Psoas muscle (tissue), 8 donors: ENCODE measurements at regions of chr2 and their contacts with region 1.

Region 1: DNA sequence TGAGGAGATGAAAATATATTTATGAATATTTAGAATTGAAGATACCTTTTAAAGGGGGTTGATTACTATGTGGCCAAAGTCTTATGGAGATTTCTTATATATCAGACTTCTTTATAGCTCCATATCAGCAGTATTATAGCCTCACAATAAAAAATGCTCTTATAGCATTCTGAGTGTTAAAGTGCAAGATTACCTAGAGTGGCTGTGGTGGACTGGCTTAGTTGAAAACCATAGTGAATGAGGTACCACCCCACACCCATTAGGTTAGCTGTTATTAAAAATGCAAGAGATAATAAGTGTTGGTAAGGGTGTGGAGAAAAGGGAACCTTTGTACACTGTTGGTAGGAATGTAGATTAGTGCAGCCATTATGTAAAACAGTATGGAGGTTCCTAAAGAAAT is 39.7 kb downstream of the NCOA1 start:
- DNase-seq: no peak
- ATAC-seq: no peak
- H3K4me3 ChIP-seq: no peak overlapping the region
- H3K27ac ChIP-seq: no peak overlapping the region
- H3K4me1 ChIP-seq: no peaks in the 10 kb centered on the region
- H3K27me3 ChIP-seq: no peaks in the 10 kb centered on the region
- CTCF ChIP-seq: no peak

Region 2: DNA sequence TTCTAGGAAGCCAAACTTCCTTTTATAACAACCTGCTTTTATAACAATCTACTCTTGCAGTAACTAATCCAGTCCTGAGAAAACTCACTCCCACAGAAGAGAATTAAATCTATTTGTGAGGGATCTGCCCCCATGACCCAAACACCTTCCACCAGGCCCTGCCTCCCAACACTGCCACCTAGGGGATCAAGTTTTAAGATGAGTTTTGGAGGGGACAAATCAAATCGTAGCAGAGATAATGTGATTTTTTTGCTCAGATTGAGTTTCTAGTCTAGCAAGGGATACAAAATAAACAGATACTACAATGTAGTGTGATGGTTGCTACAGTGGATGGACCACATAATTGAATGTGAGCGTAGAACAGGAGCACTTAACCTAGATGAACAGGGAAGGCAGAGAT is 12.5 kb after region 1 on chr2:
- intact Hi-C with region 1: loop called in 1 of 2 experiments (anchors 1 kb)
- DNase-seq: no peak
- ATAC-seq: no peak
- H3K4me3 ChIP-seq: no peak overlapping the region
- H3K27ac ChIP-seq: no peak overlapping the region
- H3K4me1 ChIP-seq: peaks cover 2% of the 10 kb centered on the region
- H3K27me3 ChIP-seq: no peaks in the 10 kb centered on the region
- CTCF ChIP-seq: peak; percentile 3